Activated B cell treated with CpG ODN at 0.5 μM for 24 hours (primary cell): ENCODE measurements at regions of chr20 and their contacts with region 1.

Region 1: DNA sequence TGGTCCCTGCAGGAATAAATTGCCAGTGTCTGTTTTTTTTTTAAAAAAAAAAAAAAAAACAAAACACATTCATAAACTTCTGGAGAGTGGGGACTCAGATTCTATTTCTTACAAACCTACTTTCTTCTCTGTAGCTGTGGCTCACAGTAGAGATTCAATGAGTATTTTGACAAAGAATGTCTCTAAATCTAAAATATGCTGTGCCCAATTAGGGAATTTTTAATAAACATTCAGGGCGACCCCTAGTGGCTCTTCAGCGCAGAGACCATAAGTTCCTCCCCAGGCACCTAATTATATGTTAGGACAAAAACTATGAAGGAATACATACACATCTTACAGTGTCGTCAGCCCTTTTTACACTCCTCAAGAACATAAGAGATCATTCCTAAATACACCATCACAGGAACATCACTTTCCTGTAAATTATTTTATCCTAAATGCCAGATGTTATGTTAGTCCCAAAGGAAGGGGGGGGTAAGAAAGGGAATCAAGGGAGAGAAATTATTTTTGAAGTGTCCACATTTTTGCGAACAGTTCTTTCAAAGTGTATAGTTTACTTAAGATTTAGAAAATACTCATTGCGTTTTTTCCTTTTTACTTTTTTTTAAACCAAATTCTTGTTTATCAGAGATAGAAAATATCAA is 21.8 kb upstream of the NAA20 start:
- DNase-seq: no peak
- ATAC-seq: peak; percentile 57
- H3K4me3 Mint-ChIP-seq: no peak overlapping the region
- H3K27ac Mint-ChIP-seq: no peak overlapping the region
- H3K4me1 Mint-ChIP-seq: no peaks in the 10 kb centered on the region
- H3K27me3 Mint-ChIP-seq: peaks cover 3% of the 10 kb centered on the region
- CTCF ChIP-seq: peak; percentile 86

Region 2: DNA sequence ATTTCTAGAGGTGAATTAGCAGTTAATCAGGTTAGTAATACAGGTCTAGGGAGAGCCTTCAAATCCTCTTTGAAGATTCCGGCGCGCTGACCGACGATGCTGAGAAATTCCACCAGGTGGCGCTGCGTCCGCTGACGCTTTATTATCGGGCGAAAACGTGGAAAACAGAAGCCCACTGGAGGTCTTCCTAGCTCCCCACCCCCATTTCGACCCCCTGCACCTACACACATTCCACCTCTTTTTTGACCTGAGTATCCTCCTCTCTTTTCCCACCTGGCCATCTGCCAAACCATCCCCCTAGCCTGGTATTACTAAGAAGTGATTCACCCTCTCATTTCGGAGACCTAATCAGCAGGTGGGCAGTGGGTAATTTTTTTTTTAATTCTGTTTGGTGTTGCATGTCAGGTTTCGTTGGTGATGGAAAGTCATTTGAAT is 302.6 kb before region 1 on chr20:
- CTCF ChIA-PET with region 1: interaction called, 5 read pairs
- POLR2A ChIA-PET with region 1: no interaction called
- intact Hi-C with region 1: loop called (anchors 1 kb)
- DNase-seq: peak; percentile 64
- ATAC-seq: peak; percentile 71
- H3K4me3 Mint-ChIP-seq: peak overlapping the region; percentile 49
- H3K27ac Mint-ChIP-seq: peak overlapping the region; percentile 76
- H3K4me1 Mint-ChIP-seq: peaks cover 11% of the 10 kb centered on the region
- H3K27me3 Mint-ChIP-seq: peaks cover 7% of the 10 kb centered on the region
- CTCF ChIP-seq: peak; percentile 76

Region 3: GRCh38 chr20:19815553-19815991 is 179.8 kb before region 1 on chr20:
- CTCF ChIA-PET with region 1: no interaction called
- POLR2A ChIA-PET with region 1: no interaction called
- intact Hi-C with region 1: loop called (anchors 1 kb)
- DNase-seq: peak; percentile 31
- ATAC-seq: peak; percentile 91
- H3K4me3 Mint-ChIP-seq: peak overlapping the region; percentile 72
- H3K27ac Mint-ChIP-seq: peak overlapping the region; percentile 78
- H3K4me1 Mint-ChIP-seq: peaks cover 70% of the 10 kb centered on the region
- H3K27me3 Mint-ChIP-seq: no peaks in the 10 kb centered on the region
- CTCF ChIP-seq: no peak

Region 4: DNA sequence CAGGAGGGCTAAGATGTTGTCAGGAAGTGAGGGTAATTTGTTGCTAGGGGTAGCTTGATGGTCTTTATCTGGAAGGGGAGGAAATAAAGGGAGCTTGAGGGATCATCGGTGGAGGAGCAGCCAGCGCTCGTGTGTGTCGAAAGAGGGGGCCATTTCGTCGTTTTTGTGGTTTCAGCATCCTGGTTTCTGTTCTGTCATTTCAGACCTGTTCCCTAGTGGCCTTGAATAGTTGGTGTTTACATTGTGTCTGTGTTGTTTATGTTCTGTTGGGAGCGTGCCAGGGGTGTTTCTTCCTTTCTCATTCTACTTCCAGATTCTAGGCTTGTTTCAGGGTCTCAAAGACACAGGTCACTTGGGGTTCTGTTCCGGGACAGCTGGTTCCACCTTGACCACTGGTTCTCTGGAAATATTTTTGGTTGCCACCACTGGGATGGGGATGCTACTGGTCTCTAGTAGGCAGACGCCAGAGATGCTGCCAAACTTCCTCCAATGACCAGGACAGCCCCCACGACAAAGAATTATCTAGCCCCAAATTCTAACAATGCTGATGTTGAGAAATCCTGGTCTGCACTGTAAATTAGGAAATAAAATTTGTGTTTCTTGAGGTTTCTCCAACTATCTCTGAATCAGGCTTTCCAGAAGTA is 92.1 kb before region 1 on chr20:
- CTCF ChIA-PET with region 1: interaction called, 57 read pairs
- POLR2A ChIA-PET with region 1: interaction called, 7 read pairs
- intact Hi-C with region 1: loop called (anchors 1 kb)
- DNase-seq: no peak
- ATAC-seq: peak; percentile 93
- H3K4me3 Mint-ChIP-seq: no peak overlapping the region
- H3K27ac Mint-ChIP-seq: no peak overlapping the region
- H3K4me1 Mint-ChIP-seq: peaks cover 11% of the 10 kb centered on the region
- H3K27me3 Mint-ChIP-seq: peaks cover 13% of the 10 kb centered on the region
- CTCF ChIP-seq: no peak

Region 5: GRCh38 chr20:19934792-19935491 is 60.4 kb before region 1 on chr20:
- CTCF ChIA-PET with region 1: interaction called, 6 read pairs
- POLR2A ChIA-PET with region 1: interaction called, 3 read pairs
- intact Hi-C with region 1: loop called (anchors 2 kb)
- DNase-seq: peak; percentile 30
- ATAC-seq: peak; percentile 67
- H3K4me3 Mint-ChIP-seq: peak overlapping the region; percentile 72
- H3K27ac Mint-ChIP-seq: peak overlapping the region; percentile 71
- H3K4me1 Mint-ChIP-seq: peaks cover 48% of the 10 kb centered on the region
- H3K27me3 Mint-ChIP-seq: no peaks in the 10 kb centered on the region
- CTCF ChIP-seq: no peak